H1 (cell line): ENCODE measurements at regions of chr16 and their contacts with region 1.

Region 1: DNA sequence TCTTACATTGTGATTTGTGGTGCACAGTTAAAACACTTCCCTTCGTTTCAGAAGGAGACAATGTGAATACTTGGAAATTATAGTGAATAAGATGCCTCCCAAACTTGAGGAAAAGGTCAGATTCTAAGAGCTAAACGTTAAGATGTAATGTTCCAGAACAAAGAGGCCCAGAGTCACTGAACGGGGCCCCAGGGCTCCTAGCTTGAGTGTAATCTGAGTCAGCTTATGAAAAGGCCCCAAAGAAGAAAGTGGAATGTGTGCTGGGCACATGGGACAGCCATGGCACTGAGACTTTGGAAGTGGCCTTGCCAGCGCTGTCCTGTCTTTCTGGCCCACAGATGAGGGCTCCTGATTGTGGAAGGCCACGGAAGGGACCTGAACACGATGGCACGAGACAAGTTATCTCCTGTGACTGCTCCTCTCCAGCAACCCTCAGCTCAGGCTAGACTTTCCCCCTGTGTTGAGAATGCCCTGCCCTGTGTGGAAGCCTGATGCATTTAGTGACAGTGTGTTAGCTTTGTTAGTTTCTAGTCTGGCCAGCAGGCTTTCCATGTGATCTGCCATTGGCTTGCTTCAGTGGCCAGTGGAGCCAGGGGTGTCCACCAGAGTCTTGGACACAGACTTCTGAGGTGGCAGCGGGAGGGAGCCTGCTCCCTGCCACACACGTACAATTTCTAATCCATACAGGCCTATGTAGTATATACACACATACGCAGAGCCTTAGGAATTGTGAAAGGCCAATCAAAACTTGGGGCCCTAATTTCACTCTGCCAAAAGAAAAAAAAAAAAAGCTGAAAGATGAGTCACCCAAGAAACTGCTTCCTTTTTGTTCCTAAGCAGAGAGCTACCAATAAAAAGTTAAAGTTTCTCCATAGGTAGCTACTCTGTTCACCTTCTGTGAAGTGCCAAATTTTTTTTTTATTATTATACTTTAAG is 13.1 kb downstream of the SPATA33 start:
- DNase-seq: no peak
- H3K4me3 ChIP-seq: no peak overlapping the region
- H3K27ac ChIP-seq: no peak overlapping the region
- H3K4me1 ChIP-seq: no peaks in the 10 kb centered on the region
- H3K27me3 ChIP-seq: no peaks in the 10 kb centered on the region
- CTCF ChIP-seq: no peak
- EP300 ChIP-seq: no peak
- POLR2A ChIP-seq: no peak
- RAD21 ChIP-seq: no peak

Region 2: GRCh38 chr16:89545831-89546574 is 124.8 kb before region 1 on chr16:
- CTCF ChIA-PET with region 1: no interaction called
- POLR2A ChIA-PET with region 1: no interaction called
- DNase-seq: no peak
- H3K4me3 ChIP-seq: no peak overlapping the region
- H3K27ac ChIP-seq: no peak overlapping the region
- H3K4me1 ChIP-seq: no peaks in the 10 kb centered on the region
- H3K27me3 ChIP-seq: no peaks in the 10 kb centered on the region
- CTCF ChIP-seq: no peak
- EP300 ChIP-seq: no peak
- POLR2A ChIP-seq: no peak
- RAD21 ChIP-seq: no peak

Region 3: GRCh38 chr16:89711601-89712273 is 41.0 kb after region 1 on chr16:
- CTCF ChIA-PET with region 1: interaction called, 12 read pairs
- POLR2A ChIA-PET with region 1: interaction called, 3 read pairs
- DNase-seq: peak in 1 of 2 experiments; percentile 91
- H3K4me3 ChIP-seq: peak overlapping the region; percentile 73 to 91 (median 78)
- H3K27ac ChIP-seq: no peak overlapping the region
- H3K4me1 ChIP-seq: peaks cover 0 to 14% (median 11%) of the 10 kb centered on the region in 4 experiments; a peak in 6 of 7 replicates
- H3K27me3 ChIP-seq: peaks cover 0 to 5% (median 0%) of the 10 kb centered on the region in 4 experiments; a peak in 4 of 7 replicates
- CTCF ChIP-seq: no peak
- EP300 ChIP-seq: no peak
- POLR2A ChIP-seq: peak in 1 of 2 experiments; percentile 79; a peak in 2 of 3 replicates
- RAD21 ChIP-seq: no peak